Keratinocyte (primary cell): ENCODE measurements at regions of chr4 and their contacts with region 1.

Region 1: GRCh38 chr4:186554539-186554913 is 841 bp downstream of the MTNR1A start:
- DNase-seq: no peak
- H3K4me3 ChIP-seq: peak overlapping the region in 2 of 3 experiments; percentile 54 to 61
- H3K27ac ChIP-seq: no peak overlapping the region
- H3K4me1 ChIP-seq: peaks cover 6% of the 10 kb centered on the region
- H3K27me3 ChIP-seq: peaks cover 10% of the 10 kb centered on the region
- CTCF ChIP-seq: peak; percentile 14 to 31 (median 29)

Region 2: GRCh38 chr4:186039697-186040096 is 514.8 kb before region 1 on chr4:
- dilution Hi-C with region 1: no loop called
- DNase-seq: no peak
- H3K4me3 ChIP-seq: no peak overlapping the region
- H3K27ac ChIP-seq: no peak overlapping the region
- H3K4me1 ChIP-seq: no peaks in the 10 kb centered on the region
- H3K27me3 ChIP-seq: no peaks in the 10 kb centered on the region
- CTCF ChIP-seq: no peak

Region 3: GRCh38 chr4:186297013-186297645 is 257.4 kb before region 1 on chr4:
- dilution Hi-C with region 1: loop called (anchors 10 kb)
- DNase-seq: no peak
- H3K4me3 ChIP-seq: no peak overlapping the region
- H3K27ac ChIP-seq: no peak overlapping the region
- H3K4me1 ChIP-seq: no peaks in the 10 kb centered on the region
- H3K27me3 ChIP-seq: peaks cover 11% of the 10 kb centered on the region
- CTCF ChIP-seq: peak in 2 of 3 experiments; percentile 46 to 55